PC-3 (cell line): ENCODE measurements at regions of chr2 and their contacts with region 1.

Region 1: DNA sequence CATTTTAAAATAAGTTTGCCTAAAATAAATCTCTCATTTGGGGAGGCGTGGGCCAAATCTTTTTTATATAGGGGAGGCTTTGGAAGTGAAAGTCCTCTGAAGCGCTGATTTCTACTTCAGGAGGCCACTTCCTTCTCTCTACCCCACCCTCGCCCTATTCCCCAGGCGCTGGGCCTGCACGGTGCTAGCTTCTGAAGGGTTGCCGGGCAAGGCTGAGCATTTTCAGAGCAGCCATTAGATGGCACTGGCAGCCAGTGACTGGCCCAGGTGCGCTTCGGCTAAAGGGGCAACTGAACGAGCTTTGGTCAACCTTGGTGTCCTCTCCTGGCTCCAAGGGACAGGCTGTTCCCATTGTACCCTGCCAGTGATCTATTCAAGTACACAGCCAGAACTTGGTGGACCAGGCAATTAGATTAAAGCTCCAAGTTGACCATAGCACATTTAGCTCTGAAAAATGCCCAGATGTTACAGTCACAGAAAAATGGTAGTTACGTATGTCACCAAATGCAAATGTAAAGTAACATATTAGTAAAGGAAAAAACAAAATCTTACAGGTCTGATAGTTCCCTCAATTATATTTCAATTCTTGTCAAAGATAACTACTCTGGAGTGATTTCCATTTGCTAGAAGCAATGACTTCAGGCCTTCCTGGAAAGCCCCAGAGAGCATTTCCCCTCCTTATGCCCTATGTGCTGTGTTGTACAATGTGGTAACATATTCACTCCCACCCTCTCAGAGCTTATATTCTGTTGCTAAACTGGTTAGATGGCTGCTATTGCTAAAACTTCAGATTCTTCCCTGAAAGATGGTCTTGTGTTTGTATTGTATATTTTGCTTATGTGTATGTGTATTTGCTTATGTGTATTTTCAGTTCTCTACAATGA is 2.1 kb downstream of the POMC start:
- DNase-seq: peak; percentile 53
- ATAC-seq: peak; percentile 85
- H3K4me3 ChIP-seq: no peak overlapping the region
- H3K27ac ChIP-seq: no peak overlapping the region
- H3K4me1 ChIP-seq: no peaks in the 10 kb centered on the region
- H3K27me3 ChIP-seq: peaks cover 38% of the 10 kb centered on the region
- CTCF ChIP-seq: peak; percentile 60

Region 2: DNA sequence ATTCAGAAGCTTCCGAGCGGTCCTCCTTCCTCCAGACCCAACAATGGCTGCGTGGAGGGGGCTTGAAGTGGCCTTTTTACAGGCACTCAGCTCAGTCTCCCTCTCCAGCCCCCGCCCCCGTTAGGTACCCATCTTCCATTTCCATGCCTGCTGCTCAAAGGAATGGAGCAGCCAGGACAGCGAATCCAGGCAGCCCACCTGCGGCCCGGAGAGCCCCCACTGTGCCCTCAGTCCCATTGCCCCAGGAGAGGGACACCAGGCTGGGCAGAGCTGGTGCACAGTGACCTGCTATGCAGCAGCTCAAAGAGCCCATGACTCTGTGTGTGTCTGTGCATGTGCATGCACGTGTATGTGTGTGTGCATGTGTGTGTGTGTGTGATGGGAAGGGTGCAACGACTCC is 12.7 kb after region 1 on chr2:
- CTCF ChIA-PET with region 1: interaction called, 10 read pairs
- POLR2A ChIA-PET with region 1: no interaction called
- intact Hi-C with region 1: no loop called
- DNase-seq: no peak
- ATAC-seq: no peak
- H3K4me3 ChIP-seq: no peak overlapping the region
- H3K27ac ChIP-seq: no peak overlapping the region
- H3K4me1 ChIP-seq: no peaks in the 10 kb centered on the region
- H3K27me3 ChIP-seq: peaks cover 16% of the 10 kb centered on the region; the same call in 1 of the 2 replicates
- CTCF ChIP-seq: no peak